T-cell (primary cell): ENCODE measurements at regions of chr5 and their contacts with region 1.

Region 1: DNA sequence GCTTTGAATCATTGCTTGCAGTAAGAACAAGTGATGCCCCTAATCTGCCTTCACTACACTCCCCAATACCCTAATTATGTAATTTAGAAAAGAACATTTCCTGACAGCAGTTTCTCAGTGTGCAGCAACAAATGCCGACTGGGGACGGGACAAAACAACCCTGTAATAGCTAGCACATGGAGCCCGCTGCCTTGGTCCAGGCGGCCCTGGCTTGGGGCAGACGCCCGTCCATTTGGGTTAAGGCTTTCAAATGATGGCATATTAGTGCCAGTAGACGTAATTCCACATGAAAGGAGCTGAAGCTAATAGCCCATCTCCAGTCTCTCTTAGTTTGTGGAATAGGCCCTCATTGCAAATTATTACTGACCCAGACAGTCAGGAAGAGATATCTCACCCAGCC is 150.6 kb upstream of the PITX1 start:
- DNase-seq: no peak
- ATAC-seq: no peak
- H3K4me3 ChIP-seq: no peak overlapping the region
- H3K4me3 Mint-ChIP-seq: no peak overlapping the region
- H3K27ac ChIP-seq: no peak overlapping the region
- H3K27ac Mint-ChIP-seq: no peak overlapping the region
- H3K4me1 ChIP-seq: peaks cover 2 to 5% of the 10 kb centered on the region in 2 experiments
- H3K4me1 Mint-ChIP-seq: peaks cover 0 to 6% (median 5%) of the 10 kb centered on the region in 3 donors
- H3K27me3 ChIP-seq: peaks cover 0 to 9% of the 10 kb centered on the region in 2 experiments
- H3K27me3 Mint-ChIP-seq: peaks cover 2 to 10% of the 10 kb centered on the region in 2 donors

Region 2: DNA sequence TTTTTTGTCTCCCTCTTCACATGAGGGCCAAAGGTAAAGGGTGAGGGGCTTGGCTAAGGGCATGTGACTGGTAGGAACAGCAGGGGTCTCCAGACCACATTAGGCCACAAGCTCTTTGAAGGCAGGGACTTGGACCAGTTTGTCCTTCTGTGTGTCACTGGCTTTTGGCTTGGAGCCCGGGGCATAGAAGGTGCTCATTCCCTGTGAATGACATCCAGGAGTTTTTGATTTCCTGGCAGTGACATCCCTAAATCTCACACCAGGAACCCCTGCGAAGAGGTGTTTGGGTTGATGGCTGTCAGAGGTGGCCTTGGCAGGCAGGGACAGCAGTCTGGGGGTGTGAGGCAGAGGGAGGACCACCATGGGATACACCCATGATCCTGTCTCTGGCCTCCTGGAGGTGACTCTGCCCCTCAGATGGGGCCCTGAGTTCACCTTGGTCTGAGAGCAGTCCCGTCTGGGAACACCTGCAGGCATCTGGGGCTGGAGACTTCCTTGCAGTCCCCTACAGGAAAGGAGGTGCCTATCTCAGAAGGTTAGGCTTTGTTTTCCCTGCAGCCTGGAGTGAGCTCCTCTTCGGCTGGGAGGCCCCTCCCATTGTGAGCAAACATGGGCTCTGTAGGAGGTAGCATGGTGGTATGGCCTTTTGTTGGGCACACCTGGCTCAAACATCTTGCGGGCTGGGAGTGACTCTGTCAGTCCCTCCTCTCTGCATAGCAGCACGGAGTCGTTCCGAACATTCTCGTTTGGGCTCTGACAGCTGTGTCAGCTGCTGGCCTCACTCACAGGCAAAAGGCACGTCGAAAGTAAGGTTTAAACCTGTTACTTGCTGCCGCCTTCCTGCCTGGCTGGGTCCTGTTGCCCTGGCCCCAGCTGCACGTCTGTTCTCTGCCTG is 112.0 kb before region 1 on chr5:
- CTCF ChIA-PET with region 1: no interaction called
- POLR2A ChIA-PET with region 1: no interaction called
- DNase-seq: no peak
- ATAC-seq: no peak
- H3K4me3 ChIP-seq: no peak overlapping the region
- H3K4me3 Mint-ChIP-seq: no peak overlapping the region
- H3K27ac ChIP-seq: no peak overlapping the region
- H3K27ac Mint-ChIP-seq: no peak overlapping the region
- H3K4me1 ChIP-seq: no peaks in the 10 kb centered on the region
- H3K4me1 Mint-ChIP-seq: no peaks in the 10 kb centered on the region
- H3K27me3 ChIP-seq: peaks cover 0 to 36% of the 10 kb centered on the region in 2 experiments
- H3K27me3 Mint-ChIP-seq: peaks cover 0 to 12% of the 10 kb centered on the region in 2 donors

Region 3: DNA sequence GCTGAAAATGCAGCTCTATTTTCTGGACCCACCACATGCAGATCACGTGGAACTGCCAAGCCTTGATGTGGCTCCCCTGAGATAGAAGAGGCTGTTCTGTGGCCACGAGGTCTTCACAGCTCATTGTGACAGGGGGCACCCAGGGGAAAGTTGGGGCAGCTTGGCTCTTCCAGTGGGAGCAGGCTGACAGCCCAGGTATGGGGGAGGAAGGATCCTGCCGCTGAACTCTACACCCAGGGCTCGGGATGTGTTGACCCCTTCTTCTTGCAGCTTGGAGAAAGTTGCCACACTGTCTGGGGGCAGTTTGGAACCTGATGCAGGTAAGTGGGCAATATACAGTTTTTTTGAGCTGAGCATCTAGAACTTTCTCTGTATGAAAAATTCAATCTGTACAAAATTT is 17.0 kb before region 1 on chr5:
- CTCF ChIA-PET with region 1: interaction called in 1 of 2 experiments, 11 read pairs
- POLR2A ChIA-PET with region 1: no interaction called
- DNase-seq: no peak
- ATAC-seq: no peak
- H3K4me3 ChIP-seq: no peak overlapping the region
- H3K4me3 Mint-ChIP-seq: no peak overlapping the region
- H3K27ac ChIP-seq: no peak overlapping the region
- H3K27ac Mint-ChIP-seq: no peak overlapping the region
- H3K4me1 ChIP-seq: no peaks in the 10 kb centered on the region
- H3K4me1 Mint-ChIP-seq: no peaks in the 10 kb centered on the region
- H3K27me3 ChIP-seq: peaks cover 6 to 29% of the 10 kb centered on the region in 2 experiments
- H3K27me3 Mint-ChIP-seq: peaks cover 42 to 58% of the 10 kb centered on the region in 2 donors